Activated naive CD4-positive, alpha-beta T cell treated with anti-CD3 and anti-CD28 coated beads for 36 hours (primary cell): ENCODE measurements at regions of chr9 and their contacts with region 1.

Region 1: DNA sequence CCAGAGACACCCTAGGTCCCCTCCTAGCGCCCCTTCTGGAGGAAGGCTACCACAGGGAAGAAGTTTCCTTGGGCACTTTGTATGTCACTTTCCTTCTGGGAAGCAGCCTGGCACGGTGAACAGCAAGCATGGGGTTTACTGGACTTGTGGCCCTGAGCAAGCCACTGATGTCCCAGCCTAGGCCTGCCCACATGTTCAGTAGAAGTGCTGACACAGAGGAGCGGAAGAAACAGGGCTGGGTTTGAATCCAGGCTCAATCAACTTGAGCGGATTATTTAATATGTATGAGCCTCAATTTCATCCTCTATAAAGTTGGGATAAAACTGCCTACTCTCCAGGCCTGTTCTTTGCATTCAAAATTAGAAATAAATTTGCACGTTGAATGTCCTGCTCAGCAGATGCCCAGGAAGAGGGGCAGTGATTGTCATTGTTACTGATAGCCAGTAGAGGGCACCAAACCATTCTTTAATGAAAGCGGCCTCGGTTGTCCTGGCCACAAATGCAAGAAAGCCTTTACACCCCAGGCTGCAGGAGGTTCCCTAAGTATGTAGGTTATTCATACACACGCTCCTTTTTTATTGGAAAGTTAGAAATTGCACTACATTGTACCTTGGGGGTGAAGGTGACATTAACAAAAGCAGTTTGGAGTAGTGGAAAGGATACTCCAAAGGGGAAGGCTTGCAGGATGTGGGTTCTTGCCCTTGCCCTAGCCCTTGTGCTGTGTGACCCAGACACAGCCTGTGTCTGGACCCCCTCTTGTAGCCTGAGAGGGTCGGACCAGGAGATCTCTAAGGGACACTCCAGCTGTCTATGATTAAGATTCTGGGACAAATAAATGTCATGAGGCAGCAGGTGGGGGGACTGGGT is 13.4 kb upstream of the XPA start:
- DNase-seq: peak; percentile 64
- H3K4me3 Mint-ChIP-seq: no peak overlapping the region
- H3K27ac Mint-ChIP-seq: no peak overlapping the region
- H3K4me1 Mint-ChIP-seq: peaks cover 20% of the 10 kb centered on the region
- H3K27me3 Mint-ChIP-seq: peaks cover 4% of the 10 kb centered on the region

Region 2: DNA sequence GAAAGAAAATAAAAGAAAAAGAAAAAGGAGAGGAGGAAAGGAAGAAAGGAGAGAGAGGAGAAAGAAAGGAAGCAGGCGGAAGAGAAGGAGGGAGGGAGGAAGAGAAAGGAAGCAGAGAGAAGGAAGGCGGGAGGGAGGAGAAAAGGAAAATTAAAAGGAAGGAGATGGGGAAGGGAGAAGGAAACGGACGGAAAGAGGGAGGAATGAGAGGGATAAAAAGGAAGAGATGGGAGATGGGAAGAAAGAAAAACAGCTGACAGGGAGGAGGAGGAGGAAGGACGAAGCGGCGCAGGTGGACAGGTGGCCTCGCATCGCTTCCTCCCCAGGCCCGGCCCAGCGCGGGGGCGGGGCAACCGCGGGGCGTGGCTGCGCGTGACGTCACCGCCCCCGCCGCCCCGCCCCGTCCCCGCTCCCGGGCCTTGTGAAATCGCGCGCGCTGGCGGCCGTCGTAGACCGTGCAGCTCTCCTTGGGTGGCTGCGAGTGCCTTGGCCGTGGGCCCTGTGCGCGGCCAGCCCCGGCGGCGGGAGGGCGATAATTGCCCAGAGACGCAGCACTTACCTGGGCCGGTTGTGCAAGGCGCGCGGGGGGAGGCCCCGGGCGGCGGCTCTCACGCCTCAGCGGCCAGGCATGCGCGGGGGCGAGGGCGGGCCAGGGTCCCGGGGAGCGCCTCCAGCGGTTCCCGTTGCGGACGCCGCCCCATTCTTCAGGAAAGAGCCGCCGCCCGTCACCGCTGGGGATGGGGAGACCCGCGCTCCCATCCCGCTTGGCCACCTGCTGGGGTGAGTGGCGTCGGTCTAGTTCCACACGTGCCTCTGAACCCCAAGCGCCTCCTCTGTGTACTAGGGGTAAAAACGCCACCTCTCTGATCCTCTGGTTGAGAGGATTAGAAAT is 92.8 kb after region 1 on chr9:
- CTCF ChIA-PET with region 1: interaction called, 3 read pairs
- intact Hi-C with region 1: loop called (anchors 1 kb)
- DNase-seq: peak; percentile 72
- H3K4me3 Mint-ChIP-seq: peak overlapping the region; percentile 77
- H3K27ac Mint-ChIP-seq: no peak overlapping the region
- H3K4me1 Mint-ChIP-seq: peaks cover 8% of the 10 kb centered on the region
- H3K27me3 Mint-ChIP-seq: peaks cover 15% of the 10 kb centered on the region

Region 3: DNA sequence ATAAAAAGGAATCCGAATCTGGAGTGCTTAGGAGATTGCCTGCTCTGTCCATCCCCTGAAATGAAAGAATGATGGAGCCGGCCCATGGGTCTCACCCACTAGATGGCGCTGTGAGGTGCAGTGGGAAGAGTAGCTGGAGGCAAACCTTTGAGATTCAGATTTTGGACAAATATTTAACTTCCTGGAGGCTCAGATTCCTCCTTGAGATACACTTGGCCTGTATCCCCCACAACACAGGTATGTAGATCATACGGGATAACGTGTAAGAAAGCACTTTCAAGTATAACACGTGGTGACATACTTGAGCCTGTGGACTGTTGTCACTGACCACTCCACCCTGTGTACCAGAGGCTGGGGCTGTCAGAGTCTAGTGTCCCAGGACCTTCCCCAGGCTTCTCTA is 179.4 kb after region 1 on chr9:
- CTCF ChIA-PET with region 1: interaction called, 3 read pairs
- intact Hi-C with region 1: loop called (anchors 2 kb)
- DNase-seq: peak; percentile 86
- H3K4me3 Mint-ChIP-seq: no peak overlapping the region
- H3K27ac Mint-ChIP-seq: no peak overlapping the region
- H3K4me1 Mint-ChIP-seq: peaks cover 16% of the 10 kb centered on the region
- H3K27me3 Mint-ChIP-seq: no peaks in the 10 kb centered on the region

Region 4: DNA sequence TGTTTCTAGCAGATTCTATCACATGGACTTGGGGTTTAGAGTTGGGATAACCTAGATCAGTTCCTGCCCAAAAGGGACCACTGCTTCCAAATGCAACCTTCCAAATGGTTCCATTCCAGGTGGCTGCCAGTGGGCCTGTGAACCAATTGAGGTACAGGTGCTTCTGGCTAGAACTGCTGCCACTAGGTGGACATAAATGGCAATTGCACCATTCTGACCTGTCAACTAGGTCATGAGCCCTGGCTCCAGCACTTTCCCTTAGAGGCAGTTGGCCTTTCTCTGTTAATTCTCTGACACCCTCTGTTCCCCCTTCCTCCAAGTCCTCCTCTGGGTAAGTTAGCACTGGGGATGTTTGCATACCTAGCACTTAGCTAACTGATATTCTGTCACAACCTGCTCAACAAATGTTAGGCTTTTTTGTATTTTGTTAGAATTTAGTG is 244.0 kb after region 1 on chr9:
- CTCF ChIA-PET with region 1: no interaction called
- intact Hi-C with region 1: loop called (anchors 1 kb)
- DNase-seq: peak; percentile 75
- H3K4me3 Mint-ChIP-seq: no peak overlapping the region
- H3K27ac Mint-ChIP-seq: no peak overlapping the region
- H3K4me1 Mint-ChIP-seq: no peaks in the 10 kb centered on the region
- H3K27me3 Mint-ChIP-seq: no peaks in the 10 kb centered on the region

Region 5: GRCh38 chr9:98263482-98264357 is 553.1 kb after region 1 on chr9:
- CTCF ChIA-PET with region 1: no interaction called
- intact Hi-C with region 1: loop called (anchors 2 kb)
- DNase-seq: peak; percentile 93
- H3K4me3 Mint-ChIP-seq: no peak overlapping the region
- H3K27ac Mint-ChIP-seq: no peak overlapping the region
- H3K4me1 Mint-ChIP-seq: no peaks in the 10 kb centered on the region
- H3K27me3 Mint-ChIP-seq: no peaks in the 10 kb centered on the region